ENCODE measurements at regions of chr2 and their contacts with region 1.

Region 1: DNA sequence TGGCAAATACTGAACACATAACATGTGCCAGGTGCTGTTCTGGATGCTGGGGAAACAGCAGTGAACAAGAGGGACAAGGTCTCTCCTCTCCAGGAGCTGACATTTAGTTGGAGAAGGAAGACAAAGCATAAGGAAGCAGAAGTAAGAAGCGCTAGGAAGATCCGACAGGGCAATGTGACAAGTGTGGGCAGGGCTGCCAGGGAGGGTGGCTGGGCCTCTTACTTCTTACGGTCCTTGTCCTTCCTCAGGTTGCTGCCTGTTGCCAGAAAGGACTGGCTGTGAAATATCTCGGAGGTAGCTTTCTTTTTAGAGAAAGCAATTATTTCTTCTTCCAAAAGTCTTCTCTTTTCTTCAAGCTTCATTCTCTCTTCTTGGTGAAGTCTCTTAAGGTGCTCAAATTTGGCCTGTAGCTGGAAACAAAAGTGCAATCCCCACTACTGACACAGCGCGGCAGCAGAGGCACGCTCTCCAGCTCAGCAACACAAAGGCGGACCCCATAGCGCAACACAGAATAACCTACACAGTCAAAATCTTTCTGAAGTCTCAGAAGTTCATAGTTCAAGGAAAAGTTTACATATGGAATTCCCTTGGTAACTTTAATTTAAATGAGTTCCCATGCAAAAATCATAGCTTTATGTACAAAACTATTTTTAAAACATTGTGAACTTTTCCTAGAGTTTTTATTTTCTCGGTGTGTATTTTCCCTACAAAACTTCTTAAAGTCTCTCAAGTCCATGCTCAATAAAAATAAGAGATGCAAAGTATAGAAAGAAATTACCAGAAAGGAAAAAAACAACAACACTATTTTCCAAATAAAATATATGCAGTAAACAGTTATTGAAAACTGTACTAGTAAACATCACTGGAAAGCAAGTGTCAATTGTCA is 67.7 kb downstream of the SEPTIN10 start:
- DNase-seq: peak; percentile 71
- H3K4me3 Mint-ChIP-seq: no peak overlapping the region
- H3K27ac Mint-ChIP-seq: no peak overlapping the region
- H3K4me1 Mint-ChIP-seq: no peaks in the 10 kb centered on the region
- H3K27me3 Mint-ChIP-seq: no peaks in the 10 kb centered on the region

Region 2: GRCh38 chr2:109457794-109458193 is 88.3 kb before region 1 on chr2:
- CTCF ChIA-PET with region 1: no interaction called
- intact Hi-C with region 1: no loop called
- DNase-seq: no peak
- H3K4me3 Mint-ChIP-seq: no peak overlapping the region
- H3K27ac Mint-ChIP-seq: no peak overlapping the region
- H3K4me1 Mint-ChIP-seq: peaks cover 19% of the 10 kb centered on the region
- H3K27me3 Mint-ChIP-seq: no peaks in the 10 kb centered on the region

Region 3: DNA sequence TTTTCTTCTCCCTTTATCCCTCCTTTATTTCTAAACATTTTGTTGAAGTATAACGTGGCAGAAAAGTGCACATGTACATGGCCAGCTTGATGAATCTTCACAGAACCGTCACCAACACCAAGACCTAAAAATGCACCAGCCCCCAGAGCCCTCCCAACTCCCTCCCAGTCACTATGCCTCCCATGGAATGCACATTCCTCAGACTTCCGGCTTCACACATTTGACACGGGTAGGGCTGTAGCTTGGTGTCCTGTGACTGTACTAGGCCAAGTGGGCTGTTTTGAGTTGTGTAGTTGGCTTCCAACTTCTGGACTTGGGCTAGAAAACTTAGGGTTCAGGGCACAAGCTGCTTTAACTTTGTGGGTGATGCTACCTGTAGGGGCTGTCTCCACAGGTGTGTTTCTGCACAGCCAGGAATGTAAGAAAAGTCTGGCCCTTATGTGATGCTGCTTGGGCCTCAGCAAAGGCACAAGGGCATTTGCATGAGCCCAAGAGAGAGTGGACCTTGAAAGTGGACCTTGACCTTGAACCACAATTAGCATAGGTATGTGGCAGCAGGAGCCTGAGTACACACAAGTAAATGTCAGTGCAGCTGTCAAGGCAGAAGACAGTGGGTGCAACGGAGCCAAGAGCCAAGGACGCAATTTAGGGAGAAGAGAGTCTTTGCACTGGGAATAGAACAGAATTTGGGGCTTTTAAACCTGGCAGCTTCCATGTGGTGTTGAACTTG is 10.7 kb before region 1 on chr2:
- CTCF ChIA-PET with region 1: interaction called, 18 read pairs
- intact Hi-C with region 1: no loop called
- DNase-seq: no peak
- H3K4me3 Mint-ChIP-seq: no peak overlapping the region
- H3K27ac Mint-ChIP-seq: no peak overlapping the region
- H3K4me1 Mint-ChIP-seq: no peaks in the 10 kb centered on the region
- H3K27me3 Mint-ChIP-seq: peaks cover 2% of the 10 kb centered on the region

Region 4: DNA sequence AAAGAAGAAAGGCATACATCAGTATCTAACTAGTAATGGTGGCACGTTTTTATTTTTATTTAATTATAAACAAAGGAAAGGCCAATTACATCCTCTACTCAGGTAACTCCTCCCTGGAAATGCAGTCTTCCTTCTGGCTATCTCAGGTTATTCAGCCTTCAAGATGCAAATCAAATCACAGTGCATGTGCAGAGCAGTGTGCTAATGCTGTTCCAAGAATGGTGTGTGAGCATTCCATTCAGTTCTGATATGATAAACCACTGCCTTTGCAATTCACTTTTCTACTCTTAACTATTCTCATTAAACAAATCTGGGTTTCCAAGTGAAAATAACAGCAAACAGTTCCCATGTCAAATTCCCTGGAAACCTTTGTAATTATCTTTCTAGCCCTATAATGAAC is 29.3 kb after region 1 on chr2:
- CTCF ChIA-PET with region 1: interaction called, 10 read pairs
- intact Hi-C with region 1: no loop called
- DNase-seq: no peak
- H3K4me3 Mint-ChIP-seq: no peak overlapping the region
- H3K27ac Mint-ChIP-seq: no peak overlapping the region
- H3K4me1 Mint-ChIP-seq: no peaks in the 10 kb centered on the region
- H3K27me3 Mint-ChIP-seq: no peaks in the 10 kb centered on the region

Region 5: GRCh38 chr2:109663721-109664120 is 117.7 kb after region 1 on chr2:
- CTCF ChIA-PET with region 1: interaction called, 5 read pairs
- intact Hi-C with region 1: loop called (anchors 1 kb)
- DNase-seq: no peak
- H3K4me3 Mint-ChIP-seq: no peak overlapping the region
- H3K27ac Mint-ChIP-seq: no peak overlapping the region
- H3K4me1 Mint-ChIP-seq: no peaks in the 10 kb centered on the region
- H3K27me3 Mint-ChIP-seq: peaks cover 5% of the 10 kb centered on the region

Region 6: DNA sequence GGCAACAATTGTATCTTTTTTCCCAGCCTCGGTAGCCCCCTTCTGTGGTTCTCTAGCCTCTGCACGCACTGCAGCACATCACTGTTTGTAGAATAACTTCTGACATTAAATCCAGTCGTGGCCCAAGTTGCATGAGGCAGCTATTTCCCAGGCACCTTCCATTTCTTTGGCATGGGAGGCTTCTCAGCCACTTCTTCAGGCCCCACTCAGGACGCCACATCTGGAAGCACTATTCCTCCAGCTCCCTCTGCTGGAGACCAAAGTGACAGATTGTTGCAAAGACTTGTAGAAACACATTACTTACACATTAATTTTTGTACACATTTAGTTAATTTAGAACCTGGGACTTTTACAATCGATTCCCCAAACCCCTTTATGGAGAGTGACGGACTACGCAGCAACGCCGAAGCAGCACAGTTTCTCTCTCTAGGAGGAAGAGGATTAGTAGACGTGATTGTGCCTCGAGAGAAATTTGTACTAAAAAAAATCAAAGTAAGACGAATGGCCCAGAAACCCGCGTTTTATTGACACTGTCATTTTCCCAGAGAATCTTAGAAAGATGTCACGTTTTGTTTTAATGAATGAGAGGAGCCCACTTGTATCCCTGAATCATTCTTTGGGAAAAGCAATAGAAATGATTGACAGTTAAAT is 190.2 kb after region 1 on chr2:
- CTCF ChIA-PET with region 1: interaction called, 25 read pairs
- intact Hi-C with region 1: loop called (anchors 1 kb)
- DNase-seq: peak; percentile 50
- H3K4me3 Mint-ChIP-seq: no peak overlapping the region
- H3K27ac Mint-ChIP-seq: no peak overlapping the region
- H3K4me1 Mint-ChIP-seq: no peaks in the 10 kb centered on the region
- H3K27me3 Mint-ChIP-seq: peaks cover 7% of the 10 kb centered on the region

Measured in activated naive CD4-positive, alpha-beta T cell treated with anti-CD3 and anti-CD28 coated beads for 36 hours (primary cell).